Activated CD8-positive, alpha-beta memory T cell treated with anti-CD3 and anti-CD28 coated beads, Interleukin-2, amount 10 ng/mL, durations not matched to agents 7 days and 5 days (primary cell): ENCODE measurements at regions of chr4 and their contacts with region 1.

Region 1: DNA sequence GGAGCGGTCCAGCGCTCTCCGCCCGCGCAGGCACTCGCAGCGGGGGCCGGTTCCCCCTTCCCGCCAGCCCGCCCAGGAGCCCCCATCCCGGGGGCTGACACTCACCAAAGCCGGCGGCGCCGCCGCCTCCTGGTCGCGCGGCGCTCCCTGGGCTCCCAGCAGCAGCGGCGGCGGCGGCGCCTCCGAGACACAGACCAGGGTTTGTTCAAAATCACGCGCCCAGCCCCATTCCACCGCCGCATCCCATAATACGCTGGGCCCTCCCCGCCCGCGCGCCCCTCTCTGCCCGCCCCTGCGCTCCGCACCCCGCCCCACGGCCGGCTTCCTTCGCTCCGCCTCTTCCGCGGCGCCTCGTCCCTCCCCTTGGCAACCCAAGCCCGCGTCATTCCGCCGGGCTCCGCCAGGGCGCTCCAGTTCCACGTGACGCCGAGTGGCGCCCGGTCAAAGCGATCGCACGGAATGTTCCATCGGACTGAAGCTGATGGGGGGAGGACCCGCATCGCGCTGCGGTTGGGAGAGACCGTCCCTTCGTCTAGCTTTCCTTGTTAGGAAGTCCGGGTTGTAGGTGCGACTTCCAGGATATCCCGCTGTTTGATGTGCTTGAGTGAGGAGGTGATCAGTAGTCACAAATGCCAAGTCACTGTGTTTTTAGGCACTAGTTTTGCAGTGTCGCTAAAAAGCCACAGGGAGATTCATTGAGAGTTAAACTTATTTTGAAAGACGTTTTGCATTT is 2.2 kb upstream of the LIN54 start:
- DNase-seq: peak; percentile 98
- ATAC-seq: peak; percentile 85
- H3K4me3 Mint-ChIP-seq: peak overlapping the region; percentile 88
- H3K27ac Mint-ChIP-seq: peak overlapping the region; percentile 87
- H3K4me1 Mint-ChIP-seq: peaks cover 31% of the 10 kb centered on the region
- H3K27me3 Mint-ChIP-seq: no peaks in the 10 kb centered on the region

Region 2: DNA sequence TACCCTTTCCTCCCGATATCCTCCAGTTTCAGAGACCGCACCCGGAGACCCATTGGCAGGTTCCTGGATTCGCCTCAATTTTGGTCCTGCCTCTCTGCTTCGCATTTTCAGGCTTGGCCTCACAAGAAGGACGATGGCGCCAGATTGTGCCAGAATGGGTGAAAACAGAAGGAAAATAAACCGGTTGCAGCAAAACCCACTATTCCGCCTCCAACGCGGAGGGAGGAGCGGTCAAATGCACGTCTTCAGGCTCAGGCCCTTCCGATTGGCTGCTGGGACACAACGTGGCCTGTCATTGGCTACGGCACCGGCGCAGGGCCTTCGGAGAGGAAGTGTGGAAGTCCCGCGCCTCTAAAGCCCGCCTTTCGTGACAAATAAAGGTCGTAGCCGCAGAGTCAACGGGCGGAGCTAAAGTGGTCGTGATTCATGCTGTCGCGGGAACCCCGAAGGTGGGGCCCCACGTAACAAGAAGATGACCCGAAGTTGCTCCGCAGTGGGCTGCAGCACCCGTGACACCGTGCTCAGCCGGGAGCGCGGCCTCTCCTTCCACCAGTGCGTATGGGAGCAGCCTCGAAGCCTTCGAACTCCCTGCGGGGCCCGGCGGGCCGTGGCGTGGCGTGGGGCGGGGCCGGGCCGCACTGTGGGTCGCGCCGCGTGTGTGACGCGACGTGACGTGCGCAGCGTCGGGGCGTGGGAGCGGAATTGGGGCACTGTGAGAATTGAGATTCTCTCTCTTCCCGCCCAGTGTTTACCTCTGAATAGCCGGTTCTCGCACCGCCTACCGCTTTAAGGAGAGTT is 112.3 kb before region 1 on chr4 and contains the start of gene THAP9:
- CTCF ChIA-PET with region 1: interaction called, 13 read pairs
- DNase-seq: peak; percentile 100
- ATAC-seq: peak; percentile 91
- H3K4me3 Mint-ChIP-seq: no peak within 1 kb of the TSS
- H3K27ac Mint-ChIP-seq: no peak within 1 kb of the TSS
- H3K4me1 Mint-ChIP-seq: peaks cover 46% of the 10 kb centered on the region
- H3K27me3 Mint-ChIP-seq: peaks cover 5% of the 10 kb centered on the region
- total RNA-seq, gene THAP9: 1.9 to 2.4 TPM

Region 3: DNA sequence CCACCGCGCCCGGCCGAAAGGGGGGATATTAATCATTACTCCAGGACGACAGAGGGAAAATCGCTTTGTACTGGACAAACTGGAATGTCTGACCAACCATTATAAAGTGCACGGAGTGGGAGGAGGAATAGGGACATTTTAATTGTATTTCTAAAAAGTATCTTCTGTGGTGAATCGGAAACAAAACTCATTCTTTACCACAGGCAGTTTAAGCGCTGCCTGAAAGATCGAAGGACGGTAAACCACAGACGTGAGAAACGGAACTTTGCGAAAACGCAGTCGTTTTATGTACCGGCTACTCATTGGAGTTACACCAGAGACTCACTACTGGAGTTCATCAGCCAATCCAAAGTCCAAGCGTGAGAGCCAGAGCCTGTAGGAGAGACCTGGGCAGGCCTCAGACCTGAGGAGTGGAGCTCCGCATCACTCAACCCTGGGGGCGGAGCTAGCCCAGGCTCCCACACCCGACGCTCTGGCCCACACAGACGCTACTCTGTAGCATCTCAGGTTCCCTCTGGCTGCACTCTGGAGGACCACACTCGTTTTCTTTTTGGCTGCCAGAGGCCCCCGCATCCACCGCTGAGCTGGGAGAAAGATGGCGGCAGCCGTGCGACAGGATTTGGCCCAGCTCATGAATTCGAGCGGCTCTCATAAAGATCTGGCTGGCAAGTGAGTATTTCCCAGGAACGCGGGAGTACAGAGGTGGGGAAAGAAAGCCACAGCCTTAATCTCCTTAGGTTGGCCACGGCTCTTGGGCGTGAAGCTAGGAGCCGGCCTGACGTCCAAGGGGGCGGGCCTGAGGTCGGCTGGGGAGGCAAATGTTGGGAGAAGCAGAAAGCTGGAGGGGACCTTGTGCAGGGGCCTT is 22.0 kb after region 1 on chr4 and contains the start of gene COPS4:
- CTCF ChIA-PET with region 1: interaction called, 11 read pairs
- DNase-seq: peak; percentile 99
- ATAC-seq: peak; percentile 98
- H3K4me3 Mint-ChIP-seq: peak within 1 kb of the TSS; percentile 88
- H3K27ac Mint-ChIP-seq: peak within 1 kb of the TSS; percentile 100
- H3K4me1 Mint-ChIP-seq: peaks cover 23% of the 10 kb centered on the region
- H3K27me3 Mint-ChIP-seq: peaks cover 2% of the 10 kb centered on the region
- total RNA-seq, gene COPS4: 27.6 to 33.1 TPM